Left ventricle myocardium inferior (tissue), 1 donor: ENCODE measurements at regions of chr12 and their contacts with region 1.

Region 1: DNA sequence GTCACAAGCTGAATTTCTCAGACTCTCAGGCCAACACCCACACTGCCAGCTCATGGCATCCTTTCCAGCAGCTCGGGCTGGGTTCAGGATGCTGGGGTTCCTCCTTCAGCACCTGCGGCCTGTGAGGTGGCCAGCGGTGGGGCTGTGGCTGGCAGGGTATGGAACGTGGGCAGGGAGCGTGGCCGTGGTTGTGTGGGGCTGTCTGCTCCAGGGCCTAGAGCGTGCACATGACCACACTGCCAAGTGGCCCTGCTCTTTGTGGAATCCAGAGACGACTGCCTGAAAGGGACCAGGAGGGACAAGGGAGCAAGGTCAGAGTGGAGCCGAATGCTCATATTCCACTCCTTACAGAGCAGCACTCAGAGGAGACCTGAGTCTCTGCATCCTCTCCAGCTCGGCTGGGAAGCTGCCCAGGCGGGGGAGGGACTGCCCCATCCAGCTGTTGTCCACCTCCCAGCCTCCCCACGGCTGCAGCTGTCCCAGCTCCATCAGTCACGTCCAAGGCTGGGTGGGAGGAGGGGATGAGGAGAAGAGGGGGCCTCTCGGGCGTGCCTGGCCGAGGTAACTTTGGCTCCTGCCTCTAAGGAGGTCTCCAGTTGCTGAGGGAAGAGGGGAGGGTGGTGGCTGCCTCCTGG is 71.3 kb downstream of the TSPAN9 start:
- DNase-seq: peak; percentile 73
- H3K4me3 ChIP-seq: no peak overlapping the region
- H3K27ac ChIP-seq: peak overlapping the region; percentile 60
- H3K4me1 ChIP-seq: peaks cover 99% of the 10 kb centered on the region
- H3K27me3 ChIP-seq: no peaks in the 10 kb centered on the region
- CTCF ChIP-seq: no peak

Region 2: DNA sequence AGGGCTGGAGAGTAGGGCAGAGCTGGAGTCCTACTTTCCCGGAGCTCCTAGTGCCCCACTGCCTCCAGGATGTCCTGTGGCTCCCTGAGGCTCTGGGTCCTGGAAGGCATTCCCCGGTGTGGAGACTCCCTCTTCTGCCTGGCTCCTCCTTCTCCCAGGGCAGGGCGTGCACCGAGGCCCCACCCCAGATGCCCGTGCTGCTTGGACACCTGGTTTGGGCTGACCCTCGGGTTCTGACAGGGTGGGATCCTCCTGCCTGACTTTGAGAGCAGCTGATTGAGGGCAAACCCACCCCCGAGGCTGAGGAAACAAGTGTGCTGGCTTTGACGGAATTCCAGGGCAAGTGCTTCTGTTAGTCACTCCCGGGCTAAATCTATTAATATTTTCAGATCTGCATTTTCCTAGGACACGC is 173.9 kb before region 1 on chr12:
- intact Hi-C with region 1: no loop called
- DNase-seq: no peak
- H3K4me3 ChIP-seq: peak overlapping the region; percentile 49
- H3K27ac ChIP-seq: no peak overlapping the region
- H3K4me1 ChIP-seq: peaks cover 29% of the 10 kb centered on the region
- H3K27me3 ChIP-seq: no peaks in the 10 kb centered on the region
- CTCF ChIP-seq: no peak

Region 3: DNA sequence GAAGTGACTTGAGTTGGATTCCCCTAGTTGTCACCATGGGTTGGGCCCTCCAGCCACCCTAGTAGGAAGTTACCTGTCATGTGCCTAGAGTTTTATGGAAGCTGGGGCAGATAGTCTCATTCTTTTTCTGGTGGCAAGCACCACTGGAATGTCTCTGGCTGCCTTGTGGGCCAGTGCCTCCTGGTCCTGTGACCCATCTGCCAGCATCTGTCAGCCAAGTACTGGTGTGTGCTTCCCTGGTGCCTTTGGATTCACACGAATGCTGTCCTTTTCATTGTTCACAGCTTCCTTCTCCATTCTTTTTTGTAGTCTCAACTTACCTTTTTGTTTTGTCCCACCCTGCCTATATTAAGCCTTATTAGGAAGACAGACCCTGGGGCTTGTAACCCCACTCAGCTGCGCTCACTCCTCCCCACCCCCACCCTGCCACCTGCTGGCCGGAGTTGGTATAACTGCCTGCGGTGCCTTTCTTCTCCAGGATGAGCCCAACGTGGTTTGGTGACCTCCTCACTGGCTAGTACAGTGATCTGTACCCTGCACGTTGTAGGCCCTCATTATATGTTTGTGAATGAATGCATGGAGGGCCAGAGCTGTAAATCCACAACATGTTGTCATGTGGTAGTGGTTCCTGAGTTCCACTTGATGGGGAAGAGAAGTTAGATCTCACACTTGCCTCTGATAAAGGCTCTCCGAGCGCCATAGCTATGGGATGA is 54.4 kb after region 1 on chr12:
- intact Hi-C with region 1: loop called (anchors 10 kb)
- DNase-seq: no peak
- H3K4me3 ChIP-seq: peak overlapping the region; percentile 76
- H3K27ac ChIP-seq: peak overlapping the region; percentile 87
- H3K4me1 ChIP-seq: peaks cover 91% of the 10 kb centered on the region
- H3K27me3 ChIP-seq: no peaks in the 10 kb centered on the region
- CTCF ChIP-seq: peak; percentile 92

Region 4: DNA sequence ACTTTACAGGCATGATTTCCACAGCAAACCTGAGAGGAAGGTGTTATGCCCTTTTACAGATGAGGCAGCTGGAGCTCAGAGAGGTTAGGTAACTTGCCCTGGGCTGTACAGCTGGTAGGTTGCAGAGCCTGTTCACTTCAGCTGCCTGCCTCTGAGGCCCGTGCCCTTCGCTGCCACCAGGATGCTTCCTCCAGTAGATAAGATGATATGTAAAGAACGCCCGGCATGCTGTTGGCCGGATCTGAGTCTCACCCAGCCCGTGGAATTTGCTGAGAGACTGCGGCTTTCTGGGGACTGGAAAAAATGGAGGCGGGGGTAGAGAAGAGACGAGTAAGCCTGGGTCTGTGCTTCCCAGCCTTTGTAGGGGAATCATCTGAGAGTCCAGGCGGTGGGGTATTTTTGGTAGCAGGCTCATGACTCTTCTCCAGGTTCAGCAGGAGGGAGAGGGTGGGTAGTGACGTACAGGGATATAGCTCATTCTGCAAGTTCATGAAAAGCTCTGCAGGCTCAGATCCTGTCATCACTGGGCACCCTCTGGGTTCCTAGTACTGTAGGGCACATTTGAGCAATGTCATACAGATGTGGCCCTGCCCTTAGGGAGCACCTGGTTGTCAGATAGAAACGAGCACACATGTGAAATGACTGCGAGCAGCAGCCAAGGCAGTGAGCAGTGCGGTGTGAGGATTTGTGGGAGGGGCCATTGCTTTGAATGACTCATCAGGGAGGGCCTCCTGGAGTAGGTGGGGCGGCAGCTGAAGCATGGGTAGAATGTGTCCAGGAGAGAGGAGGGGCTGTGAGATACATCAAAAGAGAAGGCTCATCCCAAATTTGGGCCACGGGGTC is 88.1 kb after region 1 on chr12:
- intact Hi-C with region 1: no loop called
- DNase-seq: no peak
- H3K4me3 ChIP-seq: peak overlapping the region; percentile 34
- H3K27ac ChIP-seq: peak overlapping the region; percentile 96
- H3K4me1 ChIP-seq: peaks cover 96% of the 10 kb centered on the region
- H3K27me3 ChIP-seq: no peaks in the 10 kb centered on the region
- CTCF ChIP-seq: no peak